Esophagus muscularis mucosa (tissue), 4 donors: ENCODE measurements at regions of chr17 and their contacts with region 1.

Region 1: GRCh38 chr17:18153749-18154161 is 29.9 kb upstream of the ALKBH5 start:
- DNase-seq: peak; percentile 96
- H3K4me3 ChIP-seq: peak overlapping the region; percentile 59 to 68 (median 64)
- H3K27ac ChIP-seq: peak overlapping the region; percentile 72 to 79 (median 74)
- H3K4me1 ChIP-seq: peaks cover 7 to 40% (median 32%) of the 10 kb centered on the region in 4 donors
- H3K27me3 ChIP-seq: no peaks in the 10 kb centered on the region
- CTCF ChIP-seq: no peak
- EP300 ChIP-seq: no peak
- POLR2A ChIP-seq: no peak

Region 2: GRCh38 chr17:18184143-18185031 is 30.6 kb after region 1 on chr17:
- intact Hi-C with region 1: loop called (anchors 5 kb)
- DNase-seq: no peak
- H3K4me3 ChIP-seq: peak overlapping the region; percentile 87 to 97 (median 94)
- H3K27ac ChIP-seq: peak overlapping the region; percentile 98 to 99 (median 98)
- H3K4me1 ChIP-seq: peaks cover 50 to 64% (median 58%) of the 10 kb centered on the region in 4 donors
- H3K27me3 ChIP-seq: no peaks in the 10 kb centered on the region
- CTCF ChIP-seq: no peak
- EP300 ChIP-seq: no peak
- POLR2A ChIP-seq: peak; percentile 30